Activated naive CD8-positive, alpha-beta T cell treated with anti-CD3 and anti-CD28 coated beads, Interleukin-2, amount 10 ng/mL, durations not matched to agents 7 days and 5 days (primary cell): ENCODE measurements at regions of chr1 and their contacts with region 1.

Region 1: DNA sequence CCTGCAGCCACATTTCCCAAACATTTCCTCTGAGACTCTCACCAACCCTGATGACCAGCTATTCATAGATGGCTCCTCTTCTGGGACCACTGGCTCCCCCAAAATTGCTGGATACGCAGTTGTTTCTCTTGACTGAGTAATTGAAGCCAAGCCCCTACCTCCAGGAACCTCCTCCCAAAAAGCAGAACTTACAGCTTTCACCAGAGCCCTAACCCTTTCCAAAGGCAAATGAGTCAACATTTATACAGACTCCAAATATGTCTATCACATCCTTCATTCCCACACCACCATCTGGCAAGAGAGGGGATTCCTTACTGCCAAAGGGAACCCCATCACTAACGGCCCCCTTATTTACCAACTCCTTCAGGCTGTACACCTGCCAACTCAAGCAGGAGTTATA is 20.3 kb upstream of the CA6 start:
- DNase-seq: no peak
- ATAC-seq: no peak
- H3K4me3 Mint-ChIP-seq: no peak overlapping the region
- H3K27ac Mint-ChIP-seq: no peak overlapping the region
- H3K4me1 Mint-ChIP-seq: peaks cover 28% of the 10 kb centered on the region
- H3K27me3 Mint-ChIP-seq: no peaks in the 10 kb centered on the region

Region 2: DNA sequence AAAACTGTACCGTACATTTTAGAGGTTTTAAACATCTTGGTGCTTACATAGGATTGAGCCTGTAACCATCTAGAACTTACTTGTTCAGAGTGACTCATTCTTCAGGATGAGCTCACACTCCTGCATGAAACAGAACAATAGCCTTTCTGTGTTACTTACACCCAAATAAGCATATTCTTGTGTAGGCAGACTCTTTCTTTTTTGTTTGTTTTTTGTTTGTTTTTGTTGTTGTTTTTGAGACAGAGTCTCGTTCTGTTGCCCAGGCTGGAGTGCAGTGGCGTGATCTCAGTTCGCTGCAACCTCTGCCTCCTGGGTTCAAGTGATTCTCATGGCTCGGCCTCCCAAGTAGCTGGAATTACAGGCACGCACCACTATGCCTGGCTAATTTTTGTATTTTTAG is 16.5 kb after region 1 on chr1:
- POLR2A ChIA-PET with region 1: interaction called, 754 read pairs
- DNase-seq: no peak
- ATAC-seq: no peak
- H3K4me3 Mint-ChIP-seq: peak overlapping the region; percentile 83
- H3K27ac Mint-ChIP-seq: peak overlapping the region; percentile 93
- H3K4me1 Mint-ChIP-seq: peaks cover 83% of the 10 kb centered on the region
- H3K27me3 Mint-ChIP-seq: no peaks in the 10 kb centered on the region

Region 3: GRCh38 chr1:8962812-8963530 is 37.6 kb after region 1 on chr1:
- POLR2A ChIA-PET with region 1: interaction called, 907 read pairs
- DNase-seq: peak; percentile 71
- ATAC-seq: peak; percentile 53
- H3K4me3 Mint-ChIP-seq: peak overlapping the region; percentile 79
- H3K27ac Mint-ChIP-seq: peak overlapping the region; percentile 86
- H3K4me1 Mint-ChIP-seq: peaks cover 70% of the 10 kb centered on the region
- H3K27me3 Mint-ChIP-seq: no peaks in the 10 kb centered on the region

Region 4: DNA sequence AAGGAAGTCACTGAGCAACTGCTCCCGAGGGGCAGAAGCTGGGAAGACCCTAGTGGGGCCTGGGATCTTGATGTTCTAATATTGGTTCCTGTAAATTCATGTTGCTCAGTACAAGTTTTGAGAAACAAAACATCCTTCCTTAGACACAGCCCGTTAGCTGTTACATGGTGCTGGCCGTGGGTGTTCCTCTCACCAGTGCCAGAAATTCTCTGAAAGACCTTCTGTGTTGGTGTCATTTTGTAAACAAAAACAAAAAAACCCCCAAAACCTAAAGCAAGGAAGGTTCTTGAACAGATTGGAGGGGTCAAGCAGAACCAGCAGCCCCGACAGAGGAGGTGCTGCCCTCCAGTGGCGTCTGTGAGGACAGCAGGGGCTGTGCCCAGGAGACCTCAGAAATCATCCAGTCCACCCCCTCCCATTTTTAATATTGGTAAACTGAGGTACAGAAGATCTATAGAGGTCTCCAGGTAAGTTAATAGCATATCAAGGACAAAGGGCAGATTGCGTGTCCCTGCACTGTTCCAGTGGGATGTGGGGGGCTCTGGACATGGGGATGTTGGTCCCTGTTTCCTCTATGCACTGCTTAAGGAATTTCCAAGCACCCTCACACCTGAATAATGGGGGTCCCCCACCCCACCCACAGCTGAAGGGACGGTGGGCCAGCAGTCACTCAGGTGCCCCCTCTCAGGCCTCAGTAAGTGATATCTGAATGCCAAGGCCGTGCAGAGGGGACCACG is 62.6 kb after region 1 on chr1:
- POLR2A ChIA-PET with region 1: interaction called, 169 read pairs
- DNase-seq: peak; percentile 85
- ATAC-seq: peak; percentile 53
- H3K4me3 Mint-ChIP-seq: peak overlapping the region; percentile 73
- H3K27ac Mint-ChIP-seq: peak overlapping the region; percentile 91
- H3K4me1 Mint-ChIP-seq: peaks cover 37% of the 10 kb centered on the region
- H3K27me3 Mint-ChIP-seq: peaks cover 2% of the 10 kb centered on the region

Region 5: DNA sequence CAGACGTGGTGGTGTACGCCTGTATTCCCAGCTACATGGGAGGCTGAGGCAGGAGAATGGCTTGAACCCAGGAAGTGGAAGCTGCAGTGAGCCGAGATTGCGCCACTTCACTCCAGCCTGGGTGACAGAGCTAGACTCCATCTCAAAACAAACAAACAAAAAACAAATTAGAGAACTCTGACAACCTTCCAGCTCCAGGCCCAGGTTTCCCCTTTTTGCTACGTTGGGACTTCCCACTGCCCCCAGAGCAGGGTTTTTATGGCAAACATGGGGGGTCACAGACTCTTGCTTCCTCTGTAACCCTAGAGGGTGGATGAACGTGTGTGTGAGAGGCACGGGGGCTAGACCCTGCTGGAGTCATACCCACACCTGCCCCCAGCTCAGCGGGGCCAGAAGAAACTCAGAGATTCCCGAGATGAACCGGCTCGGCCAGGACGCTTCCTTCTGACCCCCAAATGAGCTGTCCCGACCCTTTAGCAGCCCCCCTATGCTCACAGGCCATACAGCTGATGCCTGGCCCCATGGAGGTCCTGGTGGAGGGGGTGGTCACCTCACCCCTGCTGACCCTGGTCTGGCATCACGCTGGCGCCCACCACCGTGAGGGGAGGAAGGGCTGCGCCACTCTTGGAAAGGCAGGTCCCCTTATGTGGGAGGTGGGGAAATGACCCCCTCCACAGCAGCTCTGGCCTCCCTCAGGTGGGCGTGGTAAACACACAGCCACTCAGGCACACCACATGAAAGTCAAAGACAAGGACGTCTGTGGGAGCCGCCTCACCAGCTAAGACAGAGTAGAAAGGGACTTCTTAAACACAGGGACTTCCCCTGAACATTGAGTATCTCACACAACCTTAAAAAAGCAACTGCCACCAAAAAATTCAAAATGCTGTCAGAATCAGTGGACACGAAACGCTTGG is 196.3 kb after region 1 on chr1:
- POLR2A ChIA-PET with region 1: no interaction called
- DNase-seq: peak; percentile 57
- ATAC-seq: peak; percentile 88
- H3K4me3 Mint-ChIP-seq: peak overlapping the region; percentile 63
- H3K27ac Mint-ChIP-seq: peak overlapping the region; percentile 73
- H3K4me1 Mint-ChIP-seq: peaks cover 20% of the 10 kb centered on the region
- H3K27me3 Mint-ChIP-seq: peaks cover 28% of the 10 kb centered on the region